Gastrocnemius medialis (tissue), 4 donors: ENCODE measurements at regions of chr3 and their contacts with region 1.

Region 1: GRCh38 chr3:63993653-63994079 is 29.6 kb downstream of the PSMD6 start:
- DNase-seq: peak; percentile 40 to 68
- ATAC-seq: peak; percentile 94 to 96
- H3K4me3 ChIP-seq: no peak overlapping the region
- H3K27ac ChIP-seq: no peak overlapping the region
- H3K4me1 ChIP-seq: peaks cover 0 to 3% of the 10 kb centered on the region in 2 donors
- H3K27me3 ChIP-seq: no peaks in the 10 kb centered on the region
- CTCF ChIP-seq: peak; percentile 81 to 92 (median 88)
- POLR2A ChIP-seq: no peak

Region 2: GRCh38 chr3:63492464-63492863 is 501.2 kb before region 1 on chr3:
- in situ Hi-C with region 1: no loop called
- intact Hi-C with region 1: no loop called
- DNase-seq: no peak
- ATAC-seq: no peak
- H3K4me3 ChIP-seq: no peak overlapping the region
- H3K27ac ChIP-seq: no peak overlapping the region
- H3K4me1 ChIP-seq: no peaks in the 10 kb centered on the region
- H3K27me3 ChIP-seq: no peaks in the 10 kb centered on the region
- CTCF ChIP-seq: no peak
- POLR2A ChIP-seq: no peak

Region 3: DNA sequence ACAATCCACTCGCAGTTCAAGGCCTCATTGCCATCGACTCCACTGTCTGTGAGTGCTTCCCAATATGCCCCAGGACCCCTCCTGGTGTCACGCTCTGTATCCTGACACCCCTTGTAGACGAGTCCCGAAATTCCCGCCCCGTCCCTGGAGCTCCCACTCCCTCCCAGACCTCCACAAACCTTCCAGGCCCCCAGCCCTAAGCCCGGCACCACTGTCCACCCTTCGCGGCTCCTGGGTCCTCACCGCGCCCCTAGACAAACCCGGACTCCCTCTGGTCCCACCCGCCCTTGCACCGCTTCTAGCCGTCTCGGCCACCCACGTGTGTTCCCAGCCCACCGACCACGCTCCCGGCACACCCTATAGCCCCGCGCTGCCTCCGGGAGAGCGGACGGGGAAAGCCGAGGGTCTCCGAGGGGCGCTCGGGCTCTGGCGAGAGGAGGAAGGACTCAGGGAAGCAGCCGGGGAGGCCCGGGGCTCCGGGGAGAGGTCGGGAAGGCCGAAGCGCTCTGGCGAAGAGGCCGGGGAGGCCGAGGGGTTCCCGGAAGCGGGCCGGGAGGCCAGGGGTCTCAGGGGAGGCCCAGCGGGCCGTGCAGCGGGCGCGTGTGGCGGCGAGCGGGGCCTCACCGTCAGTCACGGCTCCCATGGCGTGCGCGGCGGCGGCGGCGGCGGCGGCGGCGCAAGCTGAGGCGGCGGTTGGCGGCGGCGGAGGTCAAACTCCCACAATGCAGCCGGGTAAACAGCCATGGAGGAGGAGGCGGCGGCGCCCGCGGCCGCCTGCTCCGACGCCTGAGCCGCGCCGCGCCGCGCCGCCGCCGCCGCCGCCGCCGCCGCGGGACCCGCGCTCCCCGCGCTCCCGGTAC is 130.3 kb before region 1 on chr3 and contains the starts of genes ATXN7 and THOC7:
- in situ Hi-C with region 1: no loop called
- intact Hi-C with region 1: loop called (anchors 10 kb)
- DNase-seq: peak; percentile 41 to 67
- ATAC-seq: peak; percentile 88 to 91
- H3K4me3 ChIP-seq: peak within 1 kb of the TSS; percentile 90 to 100 (median 99)
- H3K27ac ChIP-seq: peak within 1 kb of the TSS; percentile 89 to 96 (median 94)
- H3K4me1 ChIP-seq: peaks cover 8 to 17% of the 10 kb centered on the region in 2 donors
- H3K27me3 ChIP-seq: no peaks in the 10 kb centered on the region
- CTCF ChIP-seq: no peak
- POLR2A ChIP-seq: peak; percentile 18 to 40
- total RNA-seq, gene ATXN7: 14.5 to 27.4 (median 23.7) TPM
- total RNA-seq, gene THOC7: 52.0 to 74.8 (median 67.6) TPM

Region 4: GRCh38 chr3:63911873-63912767 is 81.5 kb before region 1 on chr3 and contains the start of gene SCAANT1:
- in situ Hi-C with region 1: no loop called
- intact Hi-C with region 1: loop called (anchors 5 kb)
- DNase-seq: peak; percentile 84 to 89
- ATAC-seq: peak; percentile 91 to 92
- H3K4me3 ChIP-seq: peak within 1 kb of the TSS; percentile 76 to 90 (median 82)
- H3K27ac ChIP-seq: peak within 1 kb of the TSS; percentile 82 to 98 (median 88)
- H3K4me1 ChIP-seq: peaks cover 27 to 32% of the 10 kb centered on the region in 2 donors
- H3K27me3 ChIP-seq: no peaks in the 10 kb centered on the region
- CTCF ChIP-seq: peak in 3 of 5 experiments; percentile 17 to 34 (median 19)
- POLR2A ChIP-seq: peak; percentile 54 to 73
- total RNA-seq, gene SCAANT1: not detected

Region 5: GRCh38 chr3:63961891-63962290 is 31.8 kb before region 1 on chr3:
- in situ Hi-C with region 1: no loop called
- intact Hi-C with region 1: loop called (anchors 1 kb)
- DNase-seq: peak in 1 of 2 donors; percentile 6
- ATAC-seq: peak; percentile 70 to 76
- H3K4me3 ChIP-seq: no peak overlapping the region
- H3K27ac ChIP-seq: peak overlapping the region; percentile 21 to 79 (median 57)
- H3K4me1 ChIP-seq: peaks cover 31 to 54% of the 10 kb centered on the region in 2 donors
- H3K27me3 ChIP-seq: no peaks in the 10 kb centered on the region
- CTCF ChIP-seq: peak; percentile 64 to 81 (median 66)
- POLR2A ChIP-seq: no peak

Region 6: DNA sequence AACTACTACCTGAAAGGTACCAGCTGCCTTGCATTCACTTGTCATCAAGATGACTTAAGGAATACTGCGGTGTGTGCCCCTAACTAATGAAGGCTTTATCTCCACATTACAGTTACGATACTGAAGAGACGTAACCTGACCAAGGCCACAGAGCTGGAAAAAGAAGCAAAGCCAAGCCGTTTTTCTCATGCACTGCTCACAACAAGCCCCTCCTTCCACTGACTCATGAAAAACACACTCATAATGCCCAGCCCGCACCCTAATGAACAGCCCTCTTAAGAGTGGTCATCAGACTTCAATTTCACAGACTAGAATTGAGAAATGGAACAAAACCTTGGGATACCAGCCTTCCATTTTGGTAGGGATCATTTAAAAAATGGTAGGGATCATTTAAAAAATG is 18.0 kb after region 1 on chr3:
- in situ Hi-C with region 1: no loop called
- intact Hi-C with region 1: no loop called
- DNase-seq: no peak
- ATAC-seq: no peak
- H3K4me3 ChIP-seq: no peak overlapping the region
- H3K27ac ChIP-seq: peak overlapping the region in 2 of 4 donors; percentile 3 to 14
- H3K4me1 ChIP-seq: peaks cover 0 to 7% of the 10 kb centered on the region in 2 donors
- H3K27me3 ChIP-seq: no peaks in the 10 kb centered on the region
- CTCF ChIP-seq: no peak
- POLR2A ChIP-seq: no peak